ENCODE measurements at regions of chr17 and their contacts with region 1.

Region 1: GRCh38 chr17:21126645-21127510 is at the start of gene DHRS7B:
- DNase-seq: peak; percentile 97 to 98 (median 98)
- ATAC-seq: peak; percentile 97 to 98
- H3K4me3 ChIP-seq: peak within 1 kb of the TSS; percentile 48
- H3K27ac ChIP-seq: peak within 1 kb of the TSS; percentile 69
- H3K4me1 ChIP-seq: no peaks in the 10 kb centered on the region
- H3K27me3 ChIP-seq: no peaks in the 10 kb centered on the region
- total RNA-seq, gene DHRS7B: 27.1 to 39.7 (median 30.0) TPM

Region 2: GRCh38 chr17:21194703-21195102 is 67.8 kb after region 1 on chr17:
- intact Hi-C with region 1: no loop called
- DNase-seq: peak; percentile 74 to 86 (median 81)
- ATAC-seq: peak; percentile 56 to 62
- H3K4me3 ChIP-seq: no peak overlapping the region
- H3K27ac ChIP-seq: no peak overlapping the region
- H3K4me1 ChIP-seq: peaks cover 3% of the 10 kb centered on the region
- H3K27me3 ChIP-seq: no peaks in the 10 kb centered on the region

Region 3: GRCh38 chr17:21214015-21214776 is 87.3 kb after region 1 on chr17 and contains the start of gene TMEM11:
- intact Hi-C with region 1: loop called in 3 of 4 experiments (anchors 5 to 10 kb)
- DNase-seq: peak; percentile 98 to 99 (median 99)
- ATAC-seq: peak; percentile 97 to 98
- H3K4me3 ChIP-seq: peak within 1 kb of the TSS; percentile 85
- H3K27ac ChIP-seq: peak within 1 kb of the TSS; percentile 93
- H3K4me1 ChIP-seq: peaks cover 12% of the 10 kb centered on the region
- H3K27me3 ChIP-seq: no peaks in the 10 kb centered on the region
- total RNA-seq, gene TMEM11: 26.2 to 30.7 (median 27.5) TPM

Region 4: DNA sequence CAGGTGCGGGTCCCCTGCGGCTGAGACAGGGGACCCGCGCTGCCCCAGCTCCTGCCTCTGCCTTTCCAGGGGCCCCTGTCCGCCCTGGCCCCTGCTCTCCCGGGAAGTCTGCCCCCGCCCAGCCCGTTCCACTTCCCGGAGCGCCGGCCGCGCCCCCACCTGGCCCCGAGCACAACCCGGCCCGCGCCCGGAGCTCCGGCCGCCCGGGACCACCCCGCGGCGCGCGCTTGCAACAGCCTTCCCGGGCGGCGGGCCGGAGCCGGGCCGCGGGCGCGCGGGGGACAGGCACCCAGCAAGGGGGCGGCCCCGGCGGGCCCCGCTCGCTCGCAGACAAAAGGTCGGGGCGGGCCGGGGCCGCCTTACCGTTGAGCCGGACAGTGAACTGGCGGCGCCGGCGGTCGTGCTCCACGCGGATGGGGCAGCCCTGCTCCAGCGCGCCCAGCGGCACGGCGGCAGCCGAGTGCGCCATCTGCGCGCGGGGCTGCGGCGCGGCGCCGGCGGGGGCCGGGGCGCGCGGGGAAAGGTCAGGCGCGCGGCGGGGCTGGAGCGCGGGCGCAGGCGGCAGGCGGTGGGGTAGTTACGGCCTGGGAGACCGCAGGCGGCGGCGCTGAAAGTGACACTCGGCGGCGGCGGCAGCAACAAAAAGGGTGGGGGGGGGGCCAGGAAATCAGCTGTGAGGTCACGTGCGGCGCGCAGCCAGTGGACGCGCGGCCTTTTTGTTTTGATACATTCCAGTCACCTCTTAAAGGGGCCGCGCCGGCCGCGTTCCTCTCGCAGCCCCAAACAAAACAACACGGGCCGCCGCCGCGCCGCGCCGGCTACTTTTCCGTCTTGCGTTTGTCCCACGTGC is 126.1 kb after region 1 on chr17 and contains the start of gene NATD1:
- intact Hi-C with region 1: loop called in 2 of 4 experiments (anchors 10 kb)
- DNase-seq: peak; percentile 87 to 96 (median 95)
- ATAC-seq: peak; percentile 73 to 80
- H3K4me3 ChIP-seq: peak within 1 kb of the TSS; percentile 89
- H3K27ac ChIP-seq: peak within 1 kb of the TSS; percentile 80
- H3K4me1 ChIP-seq: peaks cover 3% of the 10 kb centered on the region
- H3K27me3 ChIP-seq: no peaks in the 10 kb centered on the region
- total RNA-seq, gene NATD1: 8.1 to 15.7 (median 12.1) TPM

Region 5: GRCh38 chr17:21284319-21285163 is 157.7 kb after region 1 on chr17 and contains the start of gene MAP2K3:
- intact Hi-C with region 1: loop called (anchors 10 kb)
- DNase-seq: peak; percentile 99 to 100 (median 100)
- ATAC-seq: peak; percentile 84 to 91
- H3K4me3 ChIP-seq: peak within 1 kb of the TSS; percentile 62
- H3K27ac ChIP-seq: peak within 1 kb of the TSS; percentile 91
- H3K4me1 ChIP-seq: peaks cover 11% of the 10 kb centered on the region
- H3K27me3 ChIP-seq: no peaks in the 10 kb centered on the region
- total RNA-seq, gene MAP2K3: 29.6 to 61.2 (median 41.1) TPM

Measured in right cardiac atrium (tissue), 5 donors.